ENCODE measurements at regions of chr2 and their contacts with region 1.

Region 1: GRCh38 chr2:9799665-9800632 is 43.3 kb upstream of the TAF1B start:
- DNase-seq: peak; percentile 92
- H3K4me3 Mint-ChIP-seq: peak overlapping the region; percentile 72
- H3K27ac Mint-ChIP-seq: peak overlapping the region; percentile 98
- H3K4me1 Mint-ChIP-seq: peaks cover 49% of the 10 kb centered on the region
- H3K27me3 Mint-ChIP-seq: no peaks in the 10 kb centered on the region

Region 2: GRCh38 chr2:9703085-9703641 is 96.8 kb before region 1 on chr2:
- CTCF ChIA-PET with region 1: interaction called, 13 read pairs
- POLR2A ChIA-PET with region 1: interaction called, 5 read pairs
- DNase-seq: peak; percentile 96
- H3K4me3 Mint-ChIP-seq: peak overlapping the region; percentile 9
- H3K27ac Mint-ChIP-seq: peak overlapping the region; percentile 92
- H3K4me1 Mint-ChIP-seq: peaks cover 79% of the 10 kb centered on the region
- H3K27me3 Mint-ChIP-seq: no peaks in the 10 kb centered on the region

Region 3: GRCh38 chr2:9770308-9771100 is 29.4 kb before region 1 on chr2:
- CTCF ChIA-PET with region 1: interaction called, 105 read pairs
- POLR2A ChIA-PET with region 1: interaction called, 25 read pairs
- DNase-seq: peak; percentile 73
- H3K4me3 Mint-ChIP-seq: no peak overlapping the region
- H3K27ac Mint-ChIP-seq: no peak overlapping the region
- H3K4me1 Mint-ChIP-seq: peaks cover 21% of the 10 kb centered on the region
- H3K27me3 Mint-ChIP-seq: no peaks in the 10 kb centered on the region

Region 4: DNA sequence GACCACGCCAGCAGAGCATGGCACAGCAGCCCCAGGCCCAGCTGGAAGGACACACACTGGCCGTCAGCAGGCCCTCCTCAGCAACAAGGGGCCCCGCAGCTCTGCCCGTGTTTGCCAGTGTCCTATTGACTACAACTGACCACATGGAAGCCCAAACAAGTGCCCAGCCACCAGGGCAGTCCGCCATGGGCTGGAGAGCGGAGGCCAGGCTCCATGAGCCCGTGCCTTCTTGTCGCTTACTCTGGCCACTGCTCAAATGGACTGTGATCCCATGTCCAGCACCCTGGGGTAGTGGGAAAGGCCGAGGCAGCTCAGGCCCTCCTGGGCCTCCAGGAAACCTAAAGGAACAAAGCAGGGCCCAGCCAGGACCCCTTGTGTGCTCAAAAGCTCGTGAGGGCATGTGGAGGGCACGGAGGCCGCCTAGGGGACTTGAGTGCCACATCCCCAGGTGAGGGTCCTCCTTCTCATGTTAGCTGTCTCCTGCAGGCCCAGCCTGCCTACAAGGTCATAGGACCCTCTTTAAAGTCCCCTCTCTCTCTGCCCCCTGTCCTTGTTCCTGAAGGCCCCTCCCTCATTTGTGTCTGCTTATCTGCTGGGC is 10.5 kb before region 1 on chr2:
- CTCF ChIA-PET with region 1: interaction called, 154 read pairs
- POLR2A ChIA-PET with region 1: interaction called, 56 read pairs
- DNase-seq: no peak
- H3K4me3 Mint-ChIP-seq: no peak overlapping the region
- H3K27ac Mint-ChIP-seq: no peak overlapping the region
- H3K4me1 Mint-ChIP-seq: peaks cover 29% of the 10 kb centered on the region
- H3K27me3 Mint-ChIP-seq: no peaks in the 10 kb centered on the region

Region 5: GRCh38 chr2:9914384-9915065 is 114.6 kb after region 1 on chr2:
- CTCF ChIA-PET with region 1: interaction called, 16 read pairs
- POLR2A ChIA-PET with region 1: no interaction called
- DNase-seq: peak; percentile 67
- H3K4me3 Mint-ChIP-seq: no peak overlapping the region
- H3K27ac Mint-ChIP-seq: no peak overlapping the region
- H3K4me1 Mint-ChIP-seq: peaks cover 12% of the 10 kb centered on the region
- H3K27me3 Mint-ChIP-seq: no peaks in the 10 kb centered on the region

Measured in activated CD4-positive, alpha-beta memory T cell treated with anti-CD3 and anti-CD28 coated beads, Interleukin-2, amount 10 ng/mL, durations not matched to agents 7 days and 5 days (primary cell).